Mammary epithelial cell (primary cell): ENCODE measurements at regions of chr12 and their contacts with region 1.

Region 1: GRCh38 chr12:49515266-49515665 is 23.6 kb upstream of the KCNH3 start:
- DNase-seq: peak; percentile 73
- H3K4me3 ChIP-seq: no peak overlapping the region
- H3K27ac ChIP-seq: peak overlapping the region; percentile 44
- H3K4me1 ChIP-seq: peaks cover 23% of the 10 kb centered on the region
- H3K27me3 ChIP-seq: no peaks in the 10 kb centered on the region
- CTCF ChIP-seq: no peak

Region 2: GRCh38 chr12:49331380-49332222 is 183.7 kb before region 1 on chr12:
- CTCF ChIA-PET with region 1: interaction called, 5 read pairs
- dilution Hi-C with region 1: no loop called
- in situ Hi-C with region 1: loop called in 1 of 2 experiments (anchors 10 kb)
- intact Hi-C with region 1: loop called (anchors 1 kb)
- DNase-seq: peak; percentile 37
- H3K4me3 ChIP-seq: no peak overlapping the region
- H3K27ac ChIP-seq: no peak overlapping the region
- H3K4me1 ChIP-seq: peaks cover 4% of the 10 kb centered on the region
- H3K27me3 ChIP-seq: no peaks in the 10 kb centered on the region
- CTCF ChIP-seq: peak; percentile 70 to 92

Region 3: DNA sequence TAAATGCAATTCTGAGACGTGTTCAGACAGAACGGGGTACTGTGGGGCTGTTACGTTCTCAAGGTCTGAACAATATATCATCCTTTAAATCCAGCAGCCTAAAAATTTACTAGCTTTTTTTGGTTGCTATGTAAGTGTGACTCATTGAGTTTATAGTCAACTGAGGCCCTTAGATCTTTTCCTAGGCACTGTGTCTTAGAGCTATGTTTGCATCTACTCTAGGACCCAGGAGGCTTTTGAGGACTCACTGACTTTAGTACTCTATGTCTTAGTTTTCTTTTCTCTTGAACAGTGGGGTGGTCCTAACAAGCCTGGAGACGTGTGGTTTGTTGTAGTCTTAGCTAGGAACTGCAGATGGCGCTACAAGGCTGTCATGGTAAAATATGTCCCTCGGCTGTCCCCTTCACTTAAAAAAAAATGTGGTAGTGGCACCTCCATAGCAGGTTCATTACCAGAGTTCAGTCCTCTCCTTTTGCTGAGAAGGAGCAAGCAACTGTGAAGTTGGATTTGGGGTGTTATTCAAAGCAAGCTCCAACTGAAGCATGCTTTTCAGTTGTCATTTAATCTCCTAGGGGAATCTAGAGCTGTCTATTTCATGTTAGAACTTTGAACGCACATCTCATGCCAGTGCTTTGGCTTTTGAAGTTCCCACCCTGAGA is 156.7 kb before region 1 on chr12:
- CTCF ChIA-PET with region 1: interaction called, 43 read pairs
- dilution Hi-C with region 1: loop called (anchors 5 kb)
- in situ Hi-C with region 1: no loop called
- intact Hi-C with region 1: loop called (anchors 1 kb)
- DNase-seq: peak; percentile 71
- H3K4me3 ChIP-seq: no peak overlapping the region
- H3K27ac ChIP-seq: peak overlapping the region; percentile 20
- H3K4me1 ChIP-seq: peaks cover 23% of the 10 kb centered on the region
- H3K27me3 ChIP-seq: no peaks in the 10 kb centered on the region
- CTCF ChIP-seq: peak; percentile 66 to 84

Region 4: GRCh38 chr12:49489720-49490119 is 25.5 kb before region 1 on chr12:
- CTCF ChIA-PET with region 1: no interaction called
- dilution Hi-C with region 1: no loop called
- in situ Hi-C with region 1: no loop called
- intact Hi-C with region 1: loop called (anchors 2 kb)
- DNase-seq: peak; percentile 91
- H3K4me3 ChIP-seq: no peak overlapping the region
- H3K27ac ChIP-seq: peak overlapping the region; percentile 48
- H3K4me1 ChIP-seq: peaks cover 30% of the 10 kb centered on the region
- H3K27me3 ChIP-seq: no peaks in the 10 kb centered on the region
- CTCF ChIP-seq: peak in 1 of 2 donors; percentile 24

Region 5: DNA sequence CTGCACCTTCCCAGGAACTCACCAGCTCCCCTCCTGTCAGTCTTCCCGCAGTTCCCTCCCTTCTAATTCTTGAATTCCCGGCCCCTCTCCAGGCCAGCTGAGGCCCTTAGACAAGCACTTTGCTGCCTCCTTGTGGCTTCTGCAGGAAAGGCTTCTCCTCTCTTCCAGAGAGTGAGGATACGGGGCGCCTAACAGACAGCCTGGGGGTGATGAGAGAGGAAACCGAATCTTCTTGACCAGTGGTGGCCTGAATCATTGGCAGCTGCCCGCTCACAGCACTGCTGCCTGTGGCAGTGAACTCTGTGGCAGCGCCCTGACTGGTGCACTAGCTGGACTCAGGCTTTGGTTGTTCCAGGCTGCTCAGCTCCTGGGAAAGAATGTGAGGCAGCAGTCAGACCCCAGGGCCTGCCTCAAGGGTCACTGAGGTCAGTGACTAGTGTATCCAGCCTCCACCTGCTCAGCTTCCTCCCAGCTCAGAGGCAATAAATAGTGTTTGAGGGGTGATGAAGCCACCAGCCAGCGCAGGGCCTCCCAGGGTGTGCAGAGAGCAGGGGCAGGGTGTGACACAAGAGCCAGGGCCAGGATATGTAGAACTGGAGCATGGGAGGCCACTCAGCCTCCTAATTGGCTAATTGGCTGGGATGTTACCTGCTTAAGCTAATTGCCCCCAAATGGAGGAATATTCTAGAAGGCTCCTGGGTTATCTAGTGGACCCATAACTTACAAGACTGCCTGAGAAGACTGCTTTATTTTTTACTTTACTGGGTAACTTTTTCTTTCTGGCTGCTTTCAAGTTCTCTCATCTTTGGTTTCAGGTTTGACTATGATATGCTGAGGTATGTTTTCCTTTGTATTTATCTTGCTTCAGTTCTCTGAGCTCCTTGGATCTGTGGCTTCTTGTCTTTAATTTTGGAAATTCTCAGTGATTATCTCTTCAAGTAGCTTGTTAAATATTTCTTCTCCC is 65.6 kb after region 1 on chr12:
- CTCF ChIA-PET with region 1: no interaction called
- dilution Hi-C with region 1: no loop called
- in situ Hi-C with region 1: no loop called
- intact Hi-C with region 1: loop called (anchors 1 kb)
- DNase-seq: peak; percentile 71
- H3K4me3 ChIP-seq: no peak overlapping the region
- H3K27ac ChIP-seq: no peak overlapping the region
- H3K4me1 ChIP-seq: no peaks in the 10 kb centered on the region
- H3K27me3 ChIP-seq: no peaks in the 10 kb centered on the region
- CTCF ChIP-seq: peak; percentile 86 to 96